GM12878 (cell line): ENCODE measurements at regions of chr5 and their contacts with region 1.

Region 1: DNA sequence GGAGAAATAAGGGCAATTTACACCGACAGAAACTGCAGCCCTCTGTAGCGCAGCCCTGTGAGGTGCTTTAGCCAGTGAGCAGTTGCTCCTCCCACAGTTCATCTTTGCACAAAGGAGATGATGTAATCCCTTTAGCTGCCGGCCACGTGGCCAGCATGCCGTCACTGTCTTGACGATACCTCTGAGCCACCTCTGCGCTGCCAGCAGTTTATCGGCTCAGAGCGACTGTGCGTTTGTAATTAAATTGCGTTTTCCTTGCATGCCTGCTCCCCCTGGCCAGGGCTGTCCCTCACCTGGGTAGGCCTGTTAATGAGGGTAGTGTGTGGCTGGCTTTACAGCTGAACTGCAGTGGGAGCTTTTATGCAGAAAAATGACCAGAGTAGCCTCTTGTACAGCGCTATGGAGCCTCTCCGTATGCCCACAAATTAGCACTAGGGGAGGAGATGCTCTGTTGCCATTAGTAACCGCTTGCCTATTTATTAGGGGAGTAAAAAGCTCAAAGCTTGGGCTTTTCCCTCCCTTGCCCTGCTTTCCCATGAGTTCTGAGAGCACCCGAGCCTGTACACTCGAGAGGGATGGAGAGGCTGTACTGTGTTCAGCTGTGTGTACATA is 107.0 kb downstream of the TRIO start:
- DNase-seq: no peak
- ATAC-seq: peak; percentile 20
- H3K4me3 ChIP-seq: peak overlapping the region; percentile 34; the same call in 1 of the 2 replicates
- H3K27ac ChIP-seq: peak overlapping the region; percentile 79
- H3K4me1 ChIP-seq: peaks cover 44% of the 10 kb centered on the region
- H3K27me3 ChIP-seq: no peaks in the 10 kb centered on the region
- CTCF ChIP-seq: no peak
- EP300 ChIP-seq: no peak
- POLR2A ChIP-seq: no peak
- RAD21 ChIP-seq: no peak

Region 2: GRCh38 chr5:14048434-14048833 is 201.8 kb before region 1 on chr5:
- CTCF ChIA-PET with region 1: no interaction called
- POLR2A ChIA-PET with region 1: no interaction called
- RAD21 ChIA-PET with region 1: no interaction called
- SMC1A ChIA-PET with region 1: no interaction called
- in situ Hi-C with region 1: no loop called
- intact Hi-C with region 1: no loop called
- DNase-seq: no peak
- ATAC-seq: no peak
- H3K4me3 ChIP-seq: no peak overlapping the region
- H3K27ac ChIP-seq: no peak overlapping the region
- H3K4me1 ChIP-seq: no peaks in the 10 kb centered on the region
- H3K27me3 ChIP-seq: no peaks in the 10 kb centered on the region; a peak in 1 of 4 replicates
- CTCF ChIP-seq: no peak
- EP300 ChIP-seq: no peak
- POLR2A ChIP-seq: no peak
- RAD21 ChIP-seq: no peak

Region 3: GRCh38 chr5:14213813-14214585 is 36.2 kb before region 1 on chr5:
- CTCF ChIA-PET with region 1: interaction called, 5 read pairs
- POLR2A ChIA-PET with region 1: interaction called, 12 read pairs
- RAD21 ChIA-PET with region 1: interaction called, 17 read pairs
- SMC1A ChIA-PET with region 1: interaction called, 17 read pairs
- in situ Hi-C with region 1: no loop called
- intact Hi-C with region 1: no loop called
- DNase-seq: no peak
- ATAC-seq: peak; percentile 29
- H3K4me3 ChIP-seq: peak overlapping the region; percentile 46
- H3K27ac ChIP-seq: peak overlapping the region; percentile 94
- H3K4me1 ChIP-seq: peaks cover 80% of the 10 kb centered on the region
- H3K27me3 ChIP-seq: no peaks in the 10 kb centered on the region
- CTCF ChIP-seq: no peak
- EP300 ChIP-seq: peak in 1 of 2 experiments; percentile 35; a peak in 1 of 4 replicates
- POLR2A ChIP-seq: no peak
- RAD21 ChIP-seq: no peak

Region 4: GRCh38 chr5:14223372-14223771 is 26.8 kb before region 1 on chr5:
- CTCF ChIA-PET with region 1: interaction called, 4 read pairs
- POLR2A ChIA-PET with region 1: interaction called, 6 read pairs
- RAD21 ChIA-PET with region 1: interaction called, 3 read pairs
- SMC1A ChIA-PET with region 1: interaction called, 14 read pairs
- in situ Hi-C with region 1: no loop called
- intact Hi-C with region 1: no loop called
- DNase-seq: no peak
- ATAC-seq: no peak; the same call in 2 of the 3 replicates
- H3K4me3 ChIP-seq: no peak overlapping the region
- H3K27ac ChIP-seq: no peak overlapping the region
- H3K4me1 ChIP-seq: peaks cover 35% of the 10 kb centered on the region
- H3K27me3 ChIP-seq: no peaks in the 10 kb centered on the region
- CTCF ChIP-seq: no peak
- EP300 ChIP-seq: no peak
- POLR2A ChIP-seq: no peak
- RAD21 ChIP-seq: no peak

Region 5: DNA sequence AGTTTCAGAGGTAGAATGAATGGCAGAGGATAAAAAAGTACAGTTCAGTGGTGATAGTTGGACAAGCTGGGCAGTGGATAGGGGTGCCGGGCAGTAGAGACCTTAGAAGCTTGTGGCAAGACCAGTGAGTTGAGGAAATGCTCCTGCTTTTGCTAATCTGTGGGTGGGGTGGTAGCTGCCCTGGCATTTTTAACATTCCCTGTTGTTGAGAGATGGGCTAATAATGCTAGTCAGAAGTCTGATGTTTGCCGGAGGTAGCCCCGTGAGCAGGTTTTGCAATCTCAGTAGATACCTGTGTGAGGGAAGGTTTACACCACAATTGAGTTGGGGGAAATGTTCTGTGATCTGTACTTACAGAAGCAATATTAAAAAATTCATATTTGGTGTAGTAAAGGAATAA is 16.0 kb before region 1 on chr5:
- CTCF ChIA-PET with region 1: interaction called, 20 read pairs
- POLR2A ChIA-PET with region 1: interaction called, 4 read pairs
- RAD21 ChIA-PET with region 1: interaction called, 3 read pairs
- SMC1A ChIA-PET with region 1: interaction called, 7 read pairs
- in situ Hi-C with region 1: no loop called
- intact Hi-C with region 1: no loop called
- DNase-seq: no peak
- ATAC-seq: no peak
- H3K4me3 ChIP-seq: no peak overlapping the region
- H3K27ac ChIP-seq: no peak overlapping the region
- H3K4me1 ChIP-seq: peaks cover 20% of the 10 kb centered on the region; the same call in 1 of the 2 replicates
- H3K27me3 ChIP-seq: no peaks in the 10 kb centered on the region
- CTCF ChIP-seq: no peak
- EP300 ChIP-seq: no peak
- POLR2A ChIP-seq: no peak
- RAD21 ChIP-seq: no peak

Region 6: DNA sequence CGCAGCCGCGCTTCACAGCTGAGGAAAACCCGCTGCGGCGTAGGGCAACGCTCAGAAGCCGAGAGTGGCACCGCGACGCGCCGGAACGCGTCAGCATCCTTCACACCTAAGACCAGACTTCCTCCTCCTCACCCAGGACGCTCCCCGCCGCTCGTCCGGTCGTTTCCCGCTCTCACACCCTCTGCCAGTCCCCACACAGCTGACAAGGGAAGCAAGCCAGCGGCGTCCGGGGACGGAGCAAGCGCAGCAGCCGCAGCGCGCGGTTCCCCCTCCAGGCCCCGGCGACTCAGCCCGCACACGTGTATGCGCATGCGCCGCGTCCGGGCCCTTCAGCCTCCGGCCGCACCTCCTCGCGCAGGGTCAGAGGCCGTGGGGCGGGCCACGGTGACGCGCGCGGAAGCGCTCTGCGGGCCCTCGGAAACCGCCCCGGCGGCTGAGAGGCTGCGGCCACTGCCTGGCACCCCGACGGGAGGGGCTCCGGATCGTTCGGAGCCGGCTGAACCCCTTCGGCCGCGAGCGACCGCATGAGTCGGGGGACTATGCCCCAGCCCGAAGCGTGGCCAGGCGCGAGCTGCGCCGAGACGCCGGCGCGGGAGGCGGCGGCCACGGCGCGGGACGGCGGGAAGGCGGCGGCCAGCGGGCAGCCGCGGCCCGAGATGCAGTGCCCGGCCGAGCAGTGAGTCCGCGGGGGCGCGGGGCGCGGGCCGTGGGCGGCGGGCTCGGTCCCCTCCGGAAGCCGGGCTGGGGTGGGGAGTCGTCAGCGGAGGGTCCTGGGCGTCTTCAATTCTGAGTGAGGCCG is 414.3 kb after region 1 on chr5 and contains the start of gene OTULIN:
- CTCF ChIA-PET with region 1: no interaction called
- POLR2A ChIA-PET with region 1: no interaction called
- RAD21 ChIA-PET with region 1: no interaction called
- SMC1A ChIA-PET with region 1: no interaction called
- in situ Hi-C with region 1: no loop called
- intact Hi-C with region 1: loop called (anchors 5 kb)
- DNase-seq: peak; percentile 80
- ATAC-seq: peak; percentile 74
- H3K4me3 ChIP-seq: peak within 1 kb of the TSS; percentile 84
- H3K27ac ChIP-seq: peak within 1 kb of the TSS; percentile 90
- H3K4me1 ChIP-seq: peaks cover 3% of the 10 kb centered on the region
- H3K27me3 ChIP-seq: no peaks in the 10 kb centered on the region
- CTCF ChIP-seq: no peak
- EP300 ChIP-seq: 0 out of 4 replicates have a peak, but pooled peaks of 1 of the 2 experiments have one; percentile 9
- POLR2A ChIP-seq: peak; percentile 95
- RAD21 ChIP-seq: no peak
- polyA plus RNA-seq, gene OTULIN: 6.6 to 9.9 TPM